Mammary epithelial cell (primary cell): ENCODE measurements at regions of chr19 and their contacts with region 1.

Region 1: DNA sequence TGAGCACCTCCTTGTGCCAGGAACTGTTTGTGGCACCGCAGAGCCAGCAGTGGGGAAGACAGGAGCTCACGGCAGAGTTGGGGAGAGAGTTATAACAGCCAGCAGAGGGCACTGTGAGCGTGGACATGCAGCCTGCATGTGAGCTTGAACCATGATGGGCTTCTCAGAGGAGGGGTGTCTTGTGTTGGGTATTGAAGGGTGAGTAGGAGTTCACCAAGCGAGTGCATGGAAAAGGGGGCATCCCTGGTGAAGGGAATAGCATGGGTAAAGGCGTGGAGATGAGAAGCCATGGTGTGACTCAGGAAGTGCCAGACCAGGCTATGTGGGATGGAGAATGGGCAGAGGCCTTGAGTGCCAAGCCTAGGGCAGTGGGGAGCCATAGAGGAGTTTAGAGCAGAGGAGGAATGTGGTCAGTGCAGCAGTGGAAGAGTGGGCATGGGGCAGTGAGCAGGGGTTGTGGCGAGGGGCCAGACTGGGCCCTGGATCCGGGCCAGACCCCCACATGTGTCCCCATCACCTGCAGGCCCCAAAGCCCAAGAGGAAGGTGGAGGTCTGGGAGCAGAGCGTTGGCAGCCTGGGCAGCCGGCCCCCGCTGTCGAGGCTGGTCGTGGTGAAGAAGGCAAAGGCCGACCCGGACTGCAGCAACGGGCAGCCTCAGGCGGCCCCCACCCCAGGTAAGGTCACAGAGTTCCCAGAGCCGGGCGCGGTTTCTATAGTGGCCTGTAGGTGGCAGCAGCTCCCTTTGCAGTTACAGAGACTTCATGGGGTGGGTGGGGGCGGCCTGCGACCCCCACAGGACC is 11.8 kb upstream of the SHD start:
- DNase-seq: peak; percentile 42
- H3K4me3 ChIP-seq: no peak overlapping the region
- H3K27ac ChIP-seq: no peak overlapping the region
- H3K4me1 ChIP-seq: no peaks in the 10 kb centered on the region
- H3K27me3 ChIP-seq: no peaks in the 10 kb centered on the region
- CTCF ChIP-seq: peak; percentile 66 to 80

Region 2: GRCh38 chr19:4342615-4343369 is 75.5 kb after region 1 on chr19:
- CTCF ChIA-PET with region 1: no interaction called
- dilution Hi-C with region 1: no loop called
- in situ Hi-C with region 1: no loop called
- intact Hi-C with region 1: loop called (anchors 2 kb)
- DNase-seq: peak; percentile 100
- H3K4me3 ChIP-seq: peak overlapping the region; percentile 53 to 70 (median 62)
- H3K27ac ChIP-seq: peak overlapping the region; percentile 48
- H3K4me1 ChIP-seq: peaks cover 19% of the 10 kb centered on the region
- H3K27me3 ChIP-seq: no peaks in the 10 kb centered on the region
- CTCF ChIP-seq: peak in 1 of 2 donors; percentile 38

Region 3: DNA sequence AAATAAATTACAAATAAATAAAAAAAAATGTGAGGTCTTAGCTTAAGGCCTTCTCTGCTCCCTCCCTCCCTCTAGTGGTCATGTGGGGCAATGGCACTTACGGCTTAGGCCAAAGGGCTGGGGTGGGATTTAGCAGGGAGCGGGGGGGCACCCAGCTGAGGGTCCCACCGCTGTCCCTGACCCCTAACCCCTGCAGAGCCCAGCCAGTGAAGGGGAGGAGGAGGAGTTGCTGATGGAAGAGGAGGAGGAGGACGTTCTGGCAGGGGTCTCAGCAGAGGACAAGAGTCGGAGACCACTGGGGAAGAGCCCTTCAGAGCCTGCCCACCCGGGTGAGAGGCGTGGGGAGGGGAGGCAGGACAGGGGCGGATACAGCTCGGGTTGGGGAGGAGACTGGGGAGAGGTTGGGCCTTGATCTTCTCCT is 85.4 kb after region 1 on chr19:
- CTCF ChIA-PET with region 1: interaction called, 3 read pairs
- dilution Hi-C with region 1: no loop called
- in situ Hi-C with region 1: loop called (anchors 10 to 25 kb)
- intact Hi-C with region 1: loop called (anchors 1 kb)
- DNase-seq: no peak
- H3K4me3 ChIP-seq: no peak overlapping the region
- H3K27ac ChIP-seq: no peak overlapping the region
- H3K4me1 ChIP-seq: no peaks in the 10 kb centered on the region
- H3K27me3 ChIP-seq: no peaks in the 10 kb centered on the region
- CTCF ChIP-seq: peak; percentile 62 to 78

Region 4: DNA sequence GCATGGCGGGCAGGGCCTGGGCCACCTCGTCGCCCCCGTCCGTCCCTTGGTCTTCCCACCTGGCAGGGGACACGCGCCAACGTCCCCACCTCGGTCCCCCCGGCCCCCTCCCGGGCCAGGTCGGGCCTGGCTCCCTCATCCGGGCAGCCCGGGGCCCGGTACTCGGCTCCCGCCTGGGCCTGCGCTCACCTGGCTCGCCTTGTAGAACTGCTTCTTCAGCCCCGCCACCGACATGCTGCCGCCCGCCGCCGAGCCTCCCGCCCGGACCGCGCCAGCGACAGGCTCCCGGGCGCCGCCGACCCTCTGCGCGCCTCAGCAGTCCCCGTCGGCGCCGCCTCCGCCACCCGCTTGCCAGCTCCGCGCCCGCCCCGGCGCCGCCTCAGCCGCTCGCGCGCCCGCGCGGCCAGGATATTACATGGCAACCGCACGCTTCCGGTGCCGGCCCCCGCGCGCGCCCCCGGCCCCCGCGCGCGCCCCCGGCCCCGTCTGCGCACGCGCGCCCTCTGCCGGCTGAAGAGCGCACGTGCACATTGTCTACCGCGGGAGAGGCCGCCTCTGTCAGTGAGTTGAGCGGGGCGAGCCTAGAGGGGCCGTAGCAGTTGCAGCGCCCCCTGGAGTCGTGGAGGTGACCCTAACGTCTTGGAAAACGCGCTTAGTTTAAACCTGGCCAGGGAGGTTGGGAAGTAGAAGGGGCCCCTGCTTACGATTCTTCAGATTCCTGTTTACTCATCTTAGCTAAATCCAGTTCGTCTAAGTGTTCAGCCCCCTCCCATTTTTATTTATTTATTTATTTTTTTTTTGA is 133.0 kb after region 1 on chr19 and contains the start of gene SH3GL1:
- CTCF ChIA-PET with region 1: interaction called, 8 read pairs
- dilution Hi-C with region 1: no loop called
- in situ Hi-C with region 1: no loop called
- intact Hi-C with region 1: loop called (anchors 1 kb)
- DNase-seq: peak; percentile 75
- H3K4me3 ChIP-seq: peak within 1 kb of the TSS; percentile 75 to 96 (median 87)
- H3K27ac ChIP-seq: peak within 1 kb of the TSS; percentile 95
- H3K4me1 ChIP-seq: peaks cover 19% of the 10 kb centered on the region
- H3K27me3 ChIP-seq: no peaks in the 10 kb centered on the region
- CTCF ChIP-seq: peak; percentile 91 to 98
- total RNA-seq, gene SH3GL1: 80.5 to 149 TPM